ENCODE measurements at regions of chrX and their contacts with region 1.

Region 1: DNA sequence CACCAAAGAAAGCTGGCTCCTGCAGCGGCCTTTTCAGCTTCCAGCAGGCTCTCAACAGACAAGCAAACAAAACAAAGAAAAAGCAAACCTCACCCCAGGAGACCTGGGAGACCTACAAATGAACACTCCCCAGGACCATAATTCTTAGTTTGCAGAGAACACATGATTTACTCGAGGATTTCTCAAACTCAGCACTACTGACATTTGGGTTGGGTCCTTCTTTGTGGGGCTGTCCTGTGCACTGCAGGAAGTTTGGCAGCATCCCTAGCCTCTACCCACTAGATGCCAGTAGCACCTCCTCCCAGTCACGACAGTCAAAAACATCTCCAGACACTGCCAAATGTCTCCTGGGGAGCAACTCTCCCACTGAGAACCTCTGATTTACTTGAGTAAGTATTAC is 21.9 kb downstream of the APOO start:
- DNase-seq: no peak
- ATAC-seq: no peak
- H3K4me3 Mint-ChIP-seq: no peak overlapping the region
- H3K27ac Mint-ChIP-seq: no peak overlapping the region
- H3K4me1 Mint-ChIP-seq: no peaks in the 10 kb centered on the region
- H3K27me3 Mint-ChIP-seq: no peaks in the 10 kb centered on the region
- CTCF ChIP-seq: no peak

Region 2: DNA sequence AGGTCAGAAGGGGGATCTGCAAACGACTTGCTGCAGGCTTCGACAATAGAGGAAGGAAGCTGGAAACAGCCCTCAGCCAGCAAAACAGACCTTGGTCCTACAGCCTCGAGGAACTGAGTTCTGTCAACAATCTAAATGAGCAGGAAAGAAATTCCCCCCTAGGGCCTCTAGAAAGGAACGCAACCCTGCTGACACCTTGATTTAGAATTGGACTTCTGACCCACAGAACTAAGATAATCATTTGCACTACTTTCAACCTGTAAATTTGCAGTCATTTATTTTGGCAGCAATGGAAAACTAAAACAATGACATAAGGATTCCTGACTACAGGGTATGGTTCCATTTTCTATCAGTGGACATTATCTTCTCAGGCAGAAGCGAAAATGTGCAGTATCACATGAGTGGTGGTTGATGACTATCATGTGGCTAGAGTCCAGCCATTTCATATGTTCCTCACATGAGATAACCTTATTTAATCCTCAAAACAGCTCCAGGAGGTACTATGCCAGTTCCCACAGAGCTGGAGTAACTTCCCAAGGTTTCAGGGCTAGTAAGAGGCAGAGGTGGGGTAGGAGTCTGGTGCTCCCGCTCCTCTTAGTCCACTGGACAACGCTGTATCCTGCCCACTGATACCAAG is 41.2 kb before region 1 on chrX:
- CTCF ChIA-PET with region 1: no interaction called
- POLR2A ChIA-PET with region 1: interaction called, 10 read pairs
- intact Hi-C with region 1: no loop called
- DNase-seq: no peak
- ATAC-seq: no peak
- H3K4me3 Mint-ChIP-seq: no peak overlapping the region
- H3K27ac Mint-ChIP-seq: no peak overlapping the region
- H3K4me1 Mint-ChIP-seq: peaks cover 2% of the 10 kb centered on the region
- H3K27me3 Mint-ChIP-seq: no peaks in the 10 kb centered on the region
- CTCF ChIP-seq: no peak

Region 3: GRCh38 chrX:24412637-24413363 is 527.0 kb after region 1 on chrX:
- CTCF ChIA-PET with region 1: no interaction called
- POLR2A ChIA-PET with region 1: no interaction called
- intact Hi-C with region 1: no loop called
- DNase-seq: no peak
- ATAC-seq: no peak
- H3K4me3 Mint-ChIP-seq: no peak overlapping the region
- H3K27ac Mint-ChIP-seq: no peak overlapping the region
- H3K4me1 Mint-ChIP-seq: no peaks in the 10 kb centered on the region
- H3K27me3 Mint-ChIP-seq: no peaks in the 10 kb centered on the region
- CTCF ChIP-seq: no peak

Region 4: GRCh38 chrX:24426391-24426790 is 540.6 kb after region 1 on chrX:
- CTCF ChIA-PET with region 1: no interaction called
- POLR2A ChIA-PET with region 1: no interaction called
- intact Hi-C with region 1: no loop called
- DNase-seq: no peak
- ATAC-seq: peak; percentile 52
- H3K4me3 Mint-ChIP-seq: no peak overlapping the region
- H3K27ac Mint-ChIP-seq: no peak overlapping the region
- H3K4me1 Mint-ChIP-seq: peaks cover 4% of the 10 kb centered on the region
- H3K27me3 Mint-ChIP-seq: no peaks in the 10 kb centered on the region
- CTCF ChIP-seq: no peak